ENCODE measurements at regions of chr1 and their contacts with region 1.

Region 1: DNA sequence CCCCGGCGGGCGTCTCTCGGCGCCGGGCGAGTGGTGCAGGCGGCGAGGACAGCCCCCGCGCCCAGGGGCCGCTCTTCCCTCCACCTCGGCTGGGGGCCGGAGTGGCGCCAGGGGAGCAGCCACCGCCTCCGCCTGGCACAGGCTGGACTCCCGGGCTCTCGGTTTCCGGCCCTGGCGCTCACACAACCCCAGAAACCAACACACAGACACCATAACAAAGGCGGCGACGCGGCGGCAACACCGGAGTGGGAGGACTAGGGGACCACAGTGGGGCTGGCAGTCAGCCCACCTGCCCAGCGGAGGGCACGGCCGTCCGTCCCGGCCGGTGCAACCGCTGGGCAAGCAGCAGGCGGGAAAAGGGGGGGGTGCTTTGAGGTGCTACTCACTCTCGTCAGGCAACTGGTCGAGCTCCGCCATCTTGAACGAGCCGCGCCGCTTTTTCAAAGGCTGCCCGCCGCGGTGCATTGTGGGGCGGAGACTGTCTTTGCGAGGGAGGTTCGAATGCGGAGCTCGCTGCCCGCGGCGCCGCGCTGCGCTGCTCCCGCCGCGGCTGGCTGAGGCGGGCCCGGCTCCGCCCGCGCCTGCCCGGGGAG is at the start of gene LIN9:
- DNase-seq: peak; percentile 91
- ATAC-seq: peak; percentile 92
- H3K4me3 Mint-ChIP-seq: peak within 1 kb of the TSS; percentile 92
- H3K27ac Mint-ChIP-seq: peak within 1 kb of the TSS; percentile 65
- H3K4me1 Mint-ChIP-seq: peaks cover 10% of the 10 kb centered on the region
- H3K27me3 Mint-ChIP-seq: peaks cover 4% of the 10 kb centered on the region
- CTCF ChIP-seq: no peak
- total RNA-seq, gene LIN9: 3.5 and 4.5 TPM in 2 replicates

Region 2: DNA sequence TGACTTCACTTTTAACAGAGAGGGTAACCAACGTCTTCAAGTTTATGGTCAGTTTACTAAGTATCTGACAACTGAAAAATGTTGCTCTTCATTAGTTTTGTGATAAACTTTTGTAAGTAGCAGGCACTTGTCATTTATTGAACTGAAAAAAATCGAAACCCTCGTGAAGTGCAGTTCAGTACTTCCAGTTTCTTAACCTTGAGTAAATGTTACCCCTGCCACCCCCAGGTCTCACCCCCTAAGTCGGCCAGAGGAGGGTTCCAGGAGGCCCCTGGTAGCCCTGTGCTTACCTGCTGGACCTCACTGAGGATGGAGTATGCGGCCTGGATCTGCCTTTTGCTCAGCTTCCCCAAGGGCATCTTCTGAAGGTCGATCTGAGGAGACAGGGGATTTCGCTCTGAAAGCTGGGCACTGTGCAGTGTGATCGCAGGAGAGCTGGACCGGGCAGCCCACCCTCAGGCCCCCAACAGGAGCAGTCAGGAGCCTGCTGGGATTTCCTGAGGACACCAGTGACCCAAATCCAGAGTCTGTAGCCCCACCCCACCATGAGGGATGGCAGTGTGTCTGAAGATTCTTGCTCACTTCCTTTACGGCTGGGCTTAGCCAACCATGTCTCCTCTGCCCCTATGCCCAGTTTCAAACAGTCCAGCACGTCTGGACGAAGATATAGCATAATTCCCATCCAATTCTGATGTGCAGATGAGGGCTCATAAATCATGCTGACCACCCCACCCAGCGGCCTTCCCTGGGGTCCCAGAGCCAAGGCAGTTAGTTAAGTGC is 61.5 kb after region 1 on chr1:
- CTCF ChIA-PET with region 1: no interaction called
- POLR2A ChIA-PET with region 1: interaction called, 4 read pairs
- intact Hi-C with region 1: loop called (anchors 5 kb)
- DNase-seq: no peak
- ATAC-seq: peak; percentile 74
- H3K4me3 Mint-ChIP-seq: peak overlapping the region; percentile 68
- H3K27ac Mint-ChIP-seq: peak overlapping the region; percentile 91
- H3K4me1 Mint-ChIP-seq: peaks cover 48% of the 10 kb centered on the region
- H3K27me3 Mint-ChIP-seq: no peaks in the 10 kb centered on the region
- CTCF ChIP-seq: no peak

Measured in activated B cell treated with CpG ODN at 0.5 μM for 24 hours (primary cell).